Left ventricle myocardium inferior (tissue), 1 donor: ENCODE measurements at regions of chr12 and their contacts with region 1.

Region 1: DNA sequence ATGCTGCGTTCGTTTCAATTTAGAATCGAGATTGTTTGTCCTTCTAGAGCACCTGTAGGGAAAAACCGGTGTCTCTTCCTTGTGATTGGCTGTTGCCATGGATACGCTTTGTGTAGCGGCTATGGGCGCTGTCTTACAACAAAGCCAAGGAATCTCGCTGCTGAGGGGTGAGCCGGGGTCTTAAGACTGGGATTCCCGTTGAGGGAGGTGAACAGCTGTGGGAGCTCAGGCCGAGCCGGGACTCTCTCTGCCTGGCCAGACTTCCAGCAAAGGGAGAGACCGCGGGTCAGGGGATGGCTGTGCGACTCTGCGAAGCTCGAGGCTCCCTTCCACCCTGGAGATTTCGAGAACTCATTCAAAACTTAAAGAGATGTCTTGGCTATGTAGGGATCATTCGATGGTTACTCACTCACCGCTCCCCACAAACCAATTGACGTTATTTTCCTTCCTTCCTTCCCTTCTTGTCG is at the starts of genes LRRIQ1 and TSPAN19:
- DNase-seq: peak; percentile 20
- H3K4me3 ChIP-seq: peak within 1 kb of the TSS; percentile 69
- H3K27ac ChIP-seq: no peak within 1 kb of the TSS
- H3K4me1 ChIP-seq: peaks cover 12% of the 10 kb centered on the region
- H3K27me3 ChIP-seq: peaks cover 9% of the 10 kb centered on the region
- CTCF ChIP-seq: no peak
- total RNA-seq, gene LRRIQ1: 0.22 TPM
- total RNA-seq, gene TSPAN19: 0.33 TPM

Region 2: GRCh38 chr12:84874125-84874824 is 162.0 kb before region 1 on chr12:
- intact Hi-C with region 1: loop called (anchors 5 kb)
- DNase-seq: no peak
- H3K4me3 ChIP-seq: no peak overlapping the region
- H3K27ac ChIP-seq: no peak overlapping the region
- H3K4me1 ChIP-seq: no peaks in the 10 kb centered on the region
- H3K27me3 ChIP-seq: no peaks in the 10 kb centered on the region
- CTCF ChIP-seq: peak; percentile 80